GM10248 (cell line): ENCODE measurements at regions of chr2 and their contacts with region 1.

Region 1: DNA sequence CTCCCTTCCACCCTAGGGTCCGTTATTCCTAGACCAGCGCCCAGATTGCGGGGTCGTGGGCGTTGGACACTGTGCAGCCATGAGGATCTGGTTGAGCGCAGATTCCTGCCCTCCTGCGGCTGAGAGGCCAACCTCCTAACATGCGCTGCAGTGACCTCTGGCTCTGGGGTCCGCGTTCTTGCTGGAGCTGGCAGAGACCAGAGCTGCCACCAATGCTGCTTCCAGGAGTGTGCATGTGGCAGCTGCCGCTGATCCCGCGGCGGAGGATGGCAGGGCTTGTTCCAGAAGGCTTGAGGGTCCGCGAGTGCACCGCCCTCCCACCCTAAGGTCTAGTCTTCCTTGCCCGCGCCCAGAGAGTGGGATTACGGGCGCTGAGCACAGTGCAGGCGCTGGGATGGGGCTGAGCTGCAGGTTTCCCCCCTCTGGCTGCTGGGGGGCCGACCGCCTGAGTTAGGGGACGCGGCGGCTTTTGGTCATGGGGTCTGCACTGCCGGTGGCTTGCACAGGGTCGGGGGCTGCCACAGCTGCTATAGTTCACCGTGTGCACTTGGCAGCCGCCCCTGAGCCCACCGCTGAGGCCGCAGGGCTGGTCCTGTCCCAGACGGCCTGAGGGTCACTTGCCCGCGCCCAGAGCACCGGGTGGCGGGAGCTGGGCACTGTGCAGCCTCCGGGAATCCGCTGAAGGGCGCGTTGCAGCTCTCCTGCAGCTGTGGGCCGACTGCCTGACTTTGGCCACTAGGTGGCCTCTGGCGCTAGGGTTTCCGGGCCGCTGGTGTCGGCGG is 145.9 kb downstream of the CCDC74A start:
- DNase-seq: peak; percentile 70
- CTCF ChIP-seq: peak; percentile 95

Region 2: DNA sequence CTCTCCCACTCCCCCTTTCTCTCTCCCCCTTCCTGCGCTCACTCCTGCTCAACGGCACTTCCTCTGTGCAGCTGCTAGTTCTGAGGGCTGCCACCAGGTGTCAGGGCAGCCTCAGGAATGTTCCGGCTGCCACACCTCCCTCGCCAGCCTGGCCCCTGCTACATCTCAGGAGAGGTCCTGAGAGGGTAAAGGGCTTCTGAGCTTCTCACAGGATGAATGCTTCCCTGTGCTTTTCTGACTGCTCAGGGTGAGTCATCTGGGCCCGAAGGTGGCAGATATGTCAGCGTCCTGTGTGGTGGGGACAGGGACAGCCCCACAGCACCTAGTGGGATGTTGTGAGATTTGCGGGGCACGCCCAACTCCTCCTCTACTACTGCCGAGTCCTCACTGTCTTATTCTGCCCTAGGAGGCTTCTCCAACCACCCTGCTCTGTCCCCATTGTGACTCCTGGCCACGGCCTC is 519.5 kb before region 1 on chr2:
- CTCF ChIA-PET with region 1: interaction called, 28 read pairs
- POLR2A ChIA-PET with region 1: no interaction called
- DNase-seq: peak; percentile 86
- CTCF ChIP-seq: peak; percentile 100

Region 3: DNA sequence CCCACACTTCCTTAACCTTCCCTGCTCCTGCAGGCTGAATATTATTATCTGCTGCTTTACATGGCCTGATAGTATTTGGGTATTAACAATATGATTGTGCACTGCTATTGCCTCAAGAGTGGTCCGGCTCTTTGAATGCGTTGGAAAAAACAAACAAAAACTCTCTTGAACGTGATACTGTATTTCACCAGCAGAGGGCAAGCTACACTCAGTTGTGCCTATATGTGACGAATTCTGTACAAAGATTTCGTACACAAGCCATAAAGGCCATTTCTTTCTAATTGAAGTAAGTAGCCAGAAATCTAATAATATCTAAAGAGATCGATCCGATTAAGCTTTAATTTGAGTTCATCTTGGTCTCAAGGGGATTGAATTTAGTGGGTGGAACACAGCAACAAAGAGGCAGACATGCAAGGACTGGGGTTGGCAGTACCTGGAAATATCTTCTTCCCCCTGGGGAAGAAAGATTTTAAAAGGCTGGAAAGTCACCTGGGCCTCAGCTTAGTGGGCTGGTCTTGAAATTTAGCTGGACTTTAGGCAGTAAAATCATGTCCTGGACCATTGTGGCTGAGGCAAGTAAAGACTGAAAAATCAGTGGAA is 260.3 kb before region 1 on chr2:
- CTCF ChIA-PET with region 1: interaction called, 80 read pairs
- POLR2A ChIA-PET with region 1: no interaction called
- DNase-seq: peak; percentile 48
- CTCF ChIP-seq: peak; percentile 75

Region 4: DNA sequence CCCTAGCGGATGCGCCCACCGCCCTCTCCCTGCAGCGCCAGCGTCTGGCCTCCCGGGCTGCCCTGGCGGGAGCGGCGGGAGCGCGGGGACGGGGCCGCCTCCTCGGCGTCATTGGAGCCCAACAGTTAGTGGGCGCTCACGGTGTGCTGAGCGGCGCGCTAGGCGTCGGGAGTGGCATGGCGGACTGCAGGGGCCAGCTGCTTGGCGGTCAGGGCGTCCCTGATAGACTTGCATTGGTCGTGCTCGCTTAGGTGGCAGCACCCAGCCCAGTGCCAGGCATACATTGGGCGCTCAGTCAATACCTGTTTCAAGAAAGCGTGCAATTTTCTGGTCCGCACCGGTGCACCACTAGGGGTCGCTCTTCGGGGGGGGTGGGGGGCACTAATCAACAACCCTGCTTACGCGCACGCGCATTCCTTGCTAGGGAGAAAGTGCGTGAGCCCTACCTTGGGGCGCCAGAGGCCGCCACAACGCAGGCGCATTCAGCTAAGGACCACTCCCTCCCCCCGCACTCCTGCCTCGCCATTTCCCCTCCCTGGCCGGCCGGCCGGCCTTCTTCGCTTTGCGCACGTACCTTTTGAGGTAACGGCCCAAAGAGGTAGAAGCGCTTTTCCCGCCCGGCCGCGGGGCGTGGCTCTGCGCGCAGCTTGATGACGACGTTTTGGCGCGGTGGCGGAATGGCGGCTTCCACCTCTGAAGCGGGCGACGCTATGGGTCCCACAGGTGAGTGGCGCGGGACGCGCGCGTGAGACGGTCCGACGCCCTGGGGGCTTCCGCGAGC is 181.0 kb before region 1 on chr2:
- CTCF ChIA-PET with region 1: interaction called, 27 read pairs
- POLR2A ChIA-PET with region 1: no interaction called
- DNase-seq: peak; percentile 97
- CTCF ChIP-seq: peak; percentile 78

Region 5: GRCh38 chr2:131584940-131585339 is 88.6 kb before region 1 on chr2:
- CTCF ChIA-PET with region 1: no interaction called
- POLR2A ChIA-PET with region 1: no interaction called
- DNase-seq: peak; percentile 39
- CTCF ChIP-seq: no peak

Region 6: DNA sequence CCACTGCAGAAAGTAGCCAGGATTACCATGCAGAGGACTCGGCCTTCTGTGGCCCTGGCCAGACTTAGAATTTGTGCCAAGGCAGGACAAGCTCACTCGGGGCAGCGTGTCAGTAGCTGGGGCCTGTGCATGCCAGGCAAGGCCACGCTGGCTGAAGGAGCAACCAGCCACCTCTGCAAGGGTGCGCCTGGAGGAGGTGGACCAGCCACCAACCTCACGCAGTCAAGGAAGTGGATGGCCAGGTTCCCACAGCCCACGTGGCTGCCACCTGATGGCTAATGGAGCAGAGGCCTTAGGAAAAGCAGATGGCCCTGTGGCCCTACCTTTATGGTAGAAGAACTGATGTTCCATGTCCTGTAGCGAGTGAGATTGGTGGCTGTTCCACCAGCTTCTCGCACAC is 38.0 kb before region 1 on chr2:
- CTCF ChIA-PET with region 1: interaction called, 14 read pairs
- POLR2A ChIA-PET with region 1: no interaction called
- DNase-seq: no peak
- CTCF ChIP-seq: no peak

Region 7: GRCh38 chr2:131754929-131755720 is 81.5 kb after region 1 on chr2:
- CTCF ChIA-PET with region 1: no interaction called
- POLR2A ChIA-PET with region 1: no interaction called
- DNase-seq: no peak
- CTCF ChIP-seq: no peak

Region 8: DNA sequence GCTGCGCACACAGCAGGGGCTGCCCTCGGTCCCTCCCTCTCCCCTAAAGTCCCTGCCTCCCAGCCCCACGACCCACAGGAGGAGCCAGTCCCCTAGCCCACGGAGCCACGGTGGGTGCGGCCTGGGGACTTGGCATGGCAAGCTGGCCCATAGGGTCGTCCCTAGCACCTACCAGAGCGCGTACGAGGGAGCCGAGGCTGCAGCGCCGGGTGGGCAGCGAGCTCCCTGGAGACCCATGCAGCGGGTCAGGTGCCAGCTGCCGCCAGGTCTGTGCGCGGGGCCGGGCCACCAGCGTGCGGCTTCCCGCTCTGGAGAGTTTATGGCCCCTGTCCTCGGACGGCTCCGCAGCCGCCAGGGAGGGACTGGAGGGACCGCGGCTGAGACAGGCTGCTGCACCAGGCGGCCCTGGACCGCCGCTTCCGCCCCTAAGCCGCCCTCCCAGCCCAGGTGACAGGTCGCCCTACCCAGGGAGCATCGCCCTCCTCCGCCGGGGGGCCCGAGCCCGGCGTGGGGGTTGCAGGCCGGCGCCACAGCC is 127.7 kb after region 1 on chr2:
- CTCF ChIA-PET with region 1: interaction called, 30 read pairs
- POLR2A ChIA-PET with region 1: no interaction called
- DNase-seq: no peak
- CTCF ChIP-seq: no peak